Activated T-helper 2 cell treated with anti-CD3 and anti-CD28 coated beads, Interferon-gamma antibody, Interleukin-2, Interleukin-4, amounts not matched to agents 10 μg/mL and 5 μg/mL and 100 μg/mL, durations not matched to agents 14 hours and 24 hours and 36 hours (primary cell): ENCODE measurements at regions of chr14 and their contacts with region 1.

Region 1: GRCh38 chr14:51989293-51990234 is at the start of gene RTRAF:
- DNase-seq: peak; percentile 91
- H3K4me3 Mint-ChIP-seq: peak within 1 kb of the TSS; percentile 95
- H3K27ac Mint-ChIP-seq: peak within 1 kb of the TSS; percentile 90
- H3K4me1 Mint-ChIP-seq: peaks cover 31% of the 10 kb centered on the region
- H3K27me3 Mint-ChIP-seq: peaks cover 2% of the 10 kb centered on the region
- total RNA-seq, gene RTRAF: 192 and 212 TPM in 2 replicates

Region 2: GRCh38 chr14:51828017-51828797 is 161.4 kb before region 1 on chr14:
- intact Hi-C with region 1: loop called (anchors 5 kb)
- DNase-seq: peak; percentile 44
- H3K4me3 Mint-ChIP-seq: no peak overlapping the region
- H3K27ac Mint-ChIP-seq: no peak overlapping the region
- H3K4me1 Mint-ChIP-seq: peaks cover 4% of the 10 kb centered on the region
- H3K27me3 Mint-ChIP-seq: no peaks in the 10 kb centered on the region

Region 3: DNA sequence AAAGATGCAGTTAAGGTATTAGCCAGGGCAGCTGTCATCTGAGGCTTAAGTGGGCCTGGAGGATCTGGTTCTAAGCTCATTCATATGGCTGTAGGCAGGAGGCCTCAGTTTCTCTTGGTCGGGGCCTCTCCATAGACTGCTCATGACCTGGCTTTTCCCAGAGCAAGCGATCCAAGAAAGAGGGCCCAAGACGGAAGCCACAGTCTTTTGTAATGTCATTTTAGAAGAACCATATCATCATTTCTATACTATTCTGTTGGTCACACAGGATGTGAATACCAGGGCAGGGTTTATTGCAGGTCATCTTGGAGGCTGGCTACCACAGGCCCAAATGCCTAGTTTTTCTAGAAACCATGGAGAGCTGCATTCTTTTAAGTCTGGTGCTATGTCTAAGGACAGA is 81.5 kb before region 1 on chr14:
- intact Hi-C with region 1: loop called (anchors 5 kb)
- DNase-seq: no peak
- H3K4me3 Mint-ChIP-seq: no peak overlapping the region
- H3K27ac Mint-ChIP-seq: peak overlapping the region; percentile 28
- H3K4me1 Mint-ChIP-seq: peaks cover 23% of the 10 kb centered on the region
- H3K27me3 Mint-ChIP-seq: no peaks in the 10 kb centered on the region

Region 4: GRCh38 chr14:52124791-52125661 is 135.5 kb after region 1 on chr14:
- intact Hi-C with region 1: loop called (anchors 5 kb)
- DNase-seq: no peak
- H3K4me3 Mint-ChIP-seq: no peak overlapping the region
- H3K27ac Mint-ChIP-seq: no peak overlapping the region
- H3K4me1 Mint-ChIP-seq: peaks cover 14% of the 10 kb centered on the region
- H3K27me3 Mint-ChIP-seq: peaks cover 20% of the 10 kb centered on the region

Region 5: DNA sequence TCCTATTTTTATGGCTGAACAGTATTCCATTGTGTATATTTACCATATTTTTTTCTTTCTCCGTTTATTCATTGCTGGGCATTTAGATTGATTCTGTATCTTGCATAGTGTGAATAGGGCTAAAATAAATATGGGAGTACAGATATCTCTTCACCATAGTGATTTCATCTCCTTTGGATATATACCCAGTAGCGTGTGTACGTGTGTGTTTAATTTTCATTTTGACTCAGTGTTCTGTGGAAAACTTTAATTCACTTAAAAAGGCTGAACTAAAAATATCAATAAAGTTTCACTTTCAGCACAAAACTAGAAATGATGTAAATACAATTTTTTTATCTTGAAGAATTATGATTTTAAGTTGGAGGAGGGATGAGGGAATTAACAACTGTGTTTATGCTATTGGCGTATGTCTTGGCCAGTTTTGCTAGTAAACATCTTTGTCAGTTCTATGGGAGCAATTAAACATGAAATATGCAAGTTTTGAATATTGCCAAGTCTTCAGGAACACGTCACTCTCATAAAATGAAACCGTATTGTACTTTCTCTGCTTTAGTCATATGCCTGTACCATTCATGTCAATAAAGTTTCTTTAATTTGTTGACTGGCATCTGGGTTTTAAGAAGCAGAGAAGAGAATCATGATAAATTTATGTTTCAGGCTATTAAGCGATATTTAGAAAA is 424.3 kb after region 1 on chr14:
- intact Hi-C with region 1: loop called (anchors 10 kb)
- DNase-seq: no peak
- H3K4me3 Mint-ChIP-seq: peak overlapping the region; percentile 67
- H3K27ac Mint-ChIP-seq: peak overlapping the region; percentile 97
- H3K4me1 Mint-ChIP-seq: peaks cover 66% of the 10 kb centered on the region
- H3K27me3 Mint-ChIP-seq: no peaks in the 10 kb centered on the region

Region 6: DNA sequence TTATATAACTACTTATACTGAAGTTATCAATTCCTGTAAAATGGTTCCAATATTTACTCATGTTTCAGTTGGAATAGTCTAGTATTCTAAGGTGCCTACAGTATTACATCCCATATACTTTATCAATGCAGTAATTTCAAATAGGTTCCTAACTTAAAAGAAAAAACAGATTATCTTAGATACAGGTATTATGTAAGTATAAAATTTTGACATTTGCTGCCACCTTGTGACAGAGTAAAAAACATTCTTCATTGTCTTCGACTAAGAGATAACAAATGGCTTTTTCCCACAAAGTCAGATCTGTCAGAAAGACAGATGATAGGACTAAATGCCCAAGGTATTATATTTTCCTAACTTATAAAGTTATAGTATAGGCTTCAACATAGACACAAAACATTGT is 484.0 kb after region 1 on chr14:
- intact Hi-C with region 1: loop called (anchors 5 kb)
- DNase-seq: no peak
- H3K4me3 Mint-ChIP-seq: no peak overlapping the region
- H3K27ac Mint-ChIP-seq: no peak overlapping the region
- H3K4me1 Mint-ChIP-seq: peaks cover 26% of the 10 kb centered on the region
- H3K27me3 Mint-ChIP-seq: no peaks in the 10 kb centered on the region